ENCODE measurements at regions of chr6 and their contacts with region 1.

Region 1: DNA sequence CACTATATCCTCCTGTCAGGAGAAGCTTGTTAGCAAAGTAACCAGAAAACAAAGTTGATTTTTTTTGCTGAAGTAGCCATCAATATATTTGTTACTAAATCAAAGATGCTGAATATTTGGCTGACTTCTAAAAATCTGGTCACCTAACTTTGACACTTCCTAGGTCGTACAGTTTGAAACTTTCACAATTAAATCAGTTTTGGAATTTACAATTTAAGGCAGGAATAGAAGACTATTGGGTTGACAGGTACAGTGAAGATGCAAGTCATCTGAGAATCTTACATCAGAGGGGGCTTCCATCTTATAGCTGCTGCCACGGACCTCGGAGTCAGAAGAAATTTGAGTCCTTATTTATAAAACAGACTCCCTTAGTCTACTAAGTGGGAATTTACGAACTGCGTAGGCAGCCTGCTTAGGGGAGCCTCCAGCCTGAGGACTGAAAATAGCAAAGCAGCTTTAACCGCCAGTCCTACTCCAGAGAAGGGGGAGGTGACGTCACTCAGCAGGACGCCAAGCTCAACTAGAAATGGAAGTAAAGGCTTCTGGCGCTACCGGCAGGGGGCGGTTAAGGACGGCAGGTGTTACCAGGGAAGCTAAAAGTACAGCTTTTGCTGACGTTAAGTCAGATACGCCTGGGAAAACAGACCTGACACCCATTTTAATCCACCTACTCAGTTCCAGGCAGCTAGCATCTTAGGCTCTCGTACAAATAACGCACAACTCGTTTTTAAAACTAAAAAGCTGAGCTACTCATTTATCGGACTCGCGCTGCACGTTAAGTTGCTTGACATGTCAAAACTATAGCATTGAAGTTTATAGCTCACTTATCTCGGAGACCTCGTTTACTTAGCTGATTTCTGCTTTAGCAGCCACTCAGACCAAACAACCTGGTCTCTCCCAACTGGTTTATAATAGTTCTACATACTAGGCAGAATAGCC is 61.1 kb upstream of the HFE start:
- DNase-seq: peak; percentile 74 to 99 (median 89)
- ATAC-seq: peak; percentile 43
- H3K4me3 ChIP-seq: peak overlapping the region; percentile 50 to 76
- H3K4me3 Mint-ChIP-seq: peak overlapping the region; percentile 86
- H3K27ac ChIP-seq: peak overlapping the region; percentile 93 to 96
- H3K27ac Mint-ChIP-seq: peak overlapping the region; percentile 98
- H3K4me1 ChIP-seq: peaks cover 25% of the 10 kb centered on the region
- H3K4me1 Mint-ChIP-seq: peaks cover 48% of the 10 kb centered on the region
- H3K27me3 ChIP-seq: no peaks in the 10 kb centered on the region
- H3K27me3 Mint-ChIP-seq: no peaks in the 10 kb centered on the region
- CTCF ChIP-seq: peak; percentile 80

Region 2: DNA sequence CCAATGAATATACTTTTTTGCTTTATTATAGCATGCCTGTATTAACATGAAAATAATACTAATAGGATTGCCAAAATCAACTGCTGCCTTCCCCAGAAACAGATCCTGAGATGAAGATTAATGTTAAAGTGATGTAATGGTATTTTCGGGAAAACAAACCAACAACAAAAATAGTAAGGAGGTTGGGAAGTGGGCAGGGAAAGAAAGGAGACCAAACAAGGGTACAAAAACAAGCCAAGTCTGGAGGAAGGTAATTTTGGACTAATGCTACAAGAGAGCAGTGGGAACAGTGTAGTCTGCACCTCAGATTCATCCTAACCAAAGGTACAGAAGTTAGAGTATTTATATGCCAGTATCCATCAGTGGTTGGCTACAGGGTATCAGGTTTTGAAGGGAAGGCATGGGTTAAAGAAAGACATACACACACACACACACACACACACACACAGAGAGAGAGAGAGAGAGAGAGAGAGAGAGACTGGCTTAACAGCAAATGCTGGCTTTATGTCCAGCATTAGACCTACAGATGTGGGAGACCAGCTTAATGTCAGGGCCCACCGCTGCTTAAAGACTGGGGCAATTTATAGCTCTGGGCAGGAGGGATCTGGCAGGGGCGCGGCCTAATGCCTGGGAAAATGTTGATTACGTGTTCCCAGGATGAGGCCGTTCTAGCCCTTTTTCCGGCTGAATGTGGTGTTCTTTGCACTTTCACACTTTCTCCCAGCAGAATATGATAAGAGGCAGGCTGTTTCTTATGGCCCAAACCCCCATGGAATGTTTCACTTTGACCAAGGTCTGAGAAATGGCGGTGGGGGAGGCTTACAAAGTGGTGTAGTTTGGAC is 190.5 kb before region 1 on chr6:
- CTCF ChIA-PET with region 1: no interaction called
- POLR2A ChIA-PET with region 1: no interaction called
- intact Hi-C with region 1: no loop called
- DNase-seq: no peak
- ATAC-seq: no peak
- H3K4me3 ChIP-seq: no peak overlapping the region
- H3K4me3 Mint-ChIP-seq: no peak overlapping the region
- H3K27ac ChIP-seq: no peak overlapping the region
- H3K27ac Mint-ChIP-seq: no peak overlapping the region
- H3K4me1 ChIP-seq: no peaks in the 10 kb centered on the region
- H3K4me1 Mint-ChIP-seq: no peaks in the 10 kb centered on the region
- H3K27me3 ChIP-seq: no peaks in the 10 kb centered on the region
- H3K27me3 Mint-ChIP-seq: peaks cover 10% of the 10 kb centered on the region
- CTCF ChIP-seq: no peak

Region 3: DNA sequence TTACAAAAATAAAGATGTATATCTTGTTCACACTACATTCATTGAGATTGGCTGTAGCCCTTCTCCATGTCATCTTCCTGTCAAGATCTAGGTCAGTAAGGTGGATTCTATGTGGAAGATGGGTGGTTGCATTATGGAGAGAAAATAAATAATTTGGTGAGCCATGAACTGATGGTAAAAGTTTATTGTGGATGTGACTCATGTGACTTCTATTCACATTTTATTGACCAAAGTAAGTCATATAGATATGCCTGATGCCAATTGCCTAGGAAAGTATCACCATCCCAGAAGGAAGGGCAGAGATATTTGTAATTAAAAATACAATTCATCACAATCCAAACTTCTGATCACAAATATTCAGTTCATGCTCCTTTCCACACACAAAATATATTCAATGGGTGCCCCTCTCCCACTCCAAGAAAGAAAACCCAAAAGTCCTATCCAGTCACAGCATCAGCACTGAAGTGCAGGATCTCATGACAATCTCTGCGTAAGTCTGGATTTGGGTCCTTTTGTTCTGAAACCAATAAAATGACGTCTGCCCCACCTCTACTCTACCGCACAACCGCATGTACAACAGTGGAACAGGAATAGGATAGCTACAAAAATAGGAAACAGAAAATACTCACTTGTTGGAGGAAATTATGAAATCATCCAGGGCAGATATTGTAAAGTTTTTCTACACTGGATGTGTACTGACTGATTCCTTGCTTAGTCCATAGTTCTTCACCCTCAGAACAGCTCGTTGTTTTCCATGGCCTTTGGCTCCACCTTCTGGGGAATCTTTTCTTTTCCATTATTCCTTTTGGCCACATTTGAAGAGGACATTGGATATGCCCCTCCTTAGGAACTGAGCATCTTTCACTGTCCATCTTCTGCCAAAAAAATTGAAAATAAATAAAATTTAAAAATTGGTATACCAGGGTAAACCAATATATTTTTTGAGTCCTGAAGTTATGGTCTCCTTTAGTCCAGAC is 136.0 kb before region 1 on chr6:
- CTCF ChIA-PET with region 1: no interaction called
- POLR2A ChIA-PET with region 1: no interaction called
- intact Hi-C with region 1: no loop called
- DNase-seq: peak in 3 of 9 experiments; percentile 8 to 57 (median 48)
- ATAC-seq: no peak
- H3K4me3 ChIP-seq: no peak overlapping the region
- H3K4me3 Mint-ChIP-seq: no peak overlapping the region
- H3K27ac ChIP-seq: no peak overlapping the region
- H3K27ac Mint-ChIP-seq: no peak overlapping the region
- H3K4me1 ChIP-seq: no peaks in the 10 kb centered on the region
- H3K4me1 Mint-ChIP-seq: no peaks in the 10 kb centered on the region
- H3K27me3 ChIP-seq: no peaks in the 10 kb centered on the region
- H3K27me3 Mint-ChIP-seq: peaks cover 5% of the 10 kb centered on the region
- CTCF ChIP-seq: no peak

Region 4: GRCh38 chr6:26045065-26045927 is 19.1 kb after region 1 on chr6:
- CTCF ChIA-PET with region 1: interaction called, 51 read pairs
- POLR2A ChIA-PET with region 1: interaction called, 506 read pairs
- intact Hi-C with region 1: loop called (anchors 1 kb)
- DNase-seq: peak; percentile 54 to 93 (median 79)
- ATAC-seq: peak; percentile 59
- H3K4me3 ChIP-seq: peak overlapping the region; percentile 67 to 76
- H3K4me3 Mint-ChIP-seq: peak overlapping the region; percentile 89
- H3K27ac ChIP-seq: peak overlapping the region; percentile 73 to 81
- H3K27ac Mint-ChIP-seq: peak overlapping the region; percentile 98
- H3K4me1 ChIP-seq: peaks cover 7% of the 10 kb centered on the region
- H3K4me1 Mint-ChIP-seq: peaks cover 14% of the 10 kb centered on the region
- H3K27me3 ChIP-seq: no peaks in the 10 kb centered on the region
- H3K27me3 Mint-ChIP-seq: no peaks in the 10 kb centered on the region
- CTCF ChIP-seq: no peak

Region 5: DNA sequence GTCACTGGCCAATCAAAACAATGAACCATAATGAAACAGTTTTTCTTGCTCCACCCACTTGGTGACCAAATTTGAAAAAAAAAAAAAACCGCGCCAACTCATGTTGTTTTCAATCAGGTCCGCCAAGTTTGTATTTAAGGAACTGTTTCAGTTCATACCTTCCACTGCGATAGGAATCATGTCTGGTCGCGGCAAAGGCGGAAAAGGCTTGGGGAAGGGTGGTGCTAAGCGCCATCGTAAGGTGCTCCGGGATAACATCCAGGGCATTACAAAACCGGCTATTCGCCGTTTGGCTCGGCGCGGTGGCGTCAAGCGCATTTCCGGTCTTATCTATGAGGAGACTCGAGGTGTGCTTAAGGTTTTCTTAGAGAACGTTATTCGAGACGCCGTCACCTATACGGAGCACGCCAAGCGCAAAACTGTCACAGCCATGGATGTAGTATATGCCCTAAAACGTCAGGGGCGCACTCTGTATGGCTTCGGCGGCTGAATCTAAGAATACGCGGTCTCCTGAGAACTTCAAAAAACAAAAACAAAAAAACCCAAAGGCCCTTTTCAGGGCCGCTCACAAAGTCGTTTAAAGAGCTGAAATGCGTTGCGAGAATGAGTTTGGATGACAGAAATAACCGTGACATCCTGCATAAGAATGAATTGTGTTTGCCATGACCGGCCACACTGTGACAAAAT is 77.8 kb after region 1 on chr6:
- CTCF ChIA-PET with region 1: interaction called, 4 read pairs
- POLR2A ChIA-PET with region 1: interaction called, 34 read pairs
- intact Hi-C with region 1: no loop called
- DNase-seq: peak; percentile 84 to 97 (median 89)
- ATAC-seq: peak; percentile 91
- H3K4me3 ChIP-seq: peak overlapping the region; percentile 52 to 58
- H3K4me3 Mint-ChIP-seq: peak overlapping the region; percentile 85
- H3K27ac ChIP-seq: peak overlapping the region; percentile 85 to 92
- H3K27ac Mint-ChIP-seq: peak overlapping the region; percentile 98
- H3K4me1 ChIP-seq: peaks cover 7% of the 10 kb centered on the region
- H3K4me1 Mint-ChIP-seq: peaks cover 17% of the 10 kb centered on the region
- H3K27me3 ChIP-seq: no peaks in the 10 kb centered on the region
- H3K27me3 Mint-ChIP-seq: no peaks in the 10 kb centered on the region
- CTCF ChIP-seq: peak; percentile 67

Region 6: DNA sequence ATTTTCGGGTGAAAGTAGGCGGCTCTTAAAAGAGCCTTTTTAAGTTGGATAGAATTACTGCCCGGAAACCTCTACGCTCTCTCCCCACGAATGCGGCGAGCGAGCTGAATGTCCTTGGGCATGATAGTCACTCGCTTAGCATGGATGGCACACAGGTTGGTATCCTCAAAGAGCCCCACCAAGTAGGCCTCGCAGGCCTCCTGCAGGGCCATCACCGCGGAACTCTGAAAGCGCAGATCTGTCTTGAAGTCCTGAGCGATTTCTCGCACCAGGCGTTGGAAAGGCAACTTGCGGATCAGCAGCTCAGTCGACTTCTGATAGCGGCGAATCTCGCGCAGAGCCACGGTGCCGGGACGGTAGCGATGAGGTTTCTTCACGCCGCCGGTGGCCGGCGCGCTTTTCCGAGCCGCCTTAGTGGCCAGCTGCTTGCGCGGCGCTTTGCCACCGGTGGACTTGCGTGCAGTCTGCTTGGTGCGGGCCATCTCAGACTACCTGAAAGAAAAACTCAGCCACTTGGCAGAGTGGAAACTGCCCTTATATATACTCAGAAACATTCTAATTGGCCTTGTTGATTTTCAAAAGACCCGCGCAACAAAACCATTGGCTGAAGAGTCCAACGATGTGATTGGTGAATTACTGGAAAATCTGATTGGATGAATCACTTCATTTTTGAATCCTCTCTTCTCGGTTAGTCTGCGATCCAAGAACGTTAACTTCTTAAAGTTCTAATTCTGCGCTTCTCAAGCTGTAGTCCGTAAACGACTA is 244.9 kb after region 1 on chr6:
- CTCF ChIA-PET with region 1: interaction called, 3 read pairs
- POLR2A ChIA-PET with region 1: interaction called, 11 read pairs
- intact Hi-C with region 1: loop called (anchors 2 to 5 kb)
- DNase-seq: peak; percentile 68 to 91 (median 80)
- ATAC-seq: peak; percentile 22
- H3K4me3 ChIP-seq: peak overlapping the region; percentile 65 to 67
- H3K4me3 Mint-ChIP-seq: no peak overlapping the region
- H3K27ac ChIP-seq: peak overlapping the region; percentile 73 to 92
- H3K27ac Mint-ChIP-seq: peak overlapping the region; percentile 73
- H3K4me1 ChIP-seq: peaks cover 22% of the 10 kb centered on the region
- H3K4me1 Mint-ChIP-seq: peaks cover 13% of the 10 kb centered on the region
- H3K27me3 ChIP-seq: no peaks in the 10 kb centered on the region
- H3K27me3 Mint-ChIP-seq: no peaks in the 10 kb centered on the region
- CTCF ChIP-seq: no peak

Region 7: DNA sequence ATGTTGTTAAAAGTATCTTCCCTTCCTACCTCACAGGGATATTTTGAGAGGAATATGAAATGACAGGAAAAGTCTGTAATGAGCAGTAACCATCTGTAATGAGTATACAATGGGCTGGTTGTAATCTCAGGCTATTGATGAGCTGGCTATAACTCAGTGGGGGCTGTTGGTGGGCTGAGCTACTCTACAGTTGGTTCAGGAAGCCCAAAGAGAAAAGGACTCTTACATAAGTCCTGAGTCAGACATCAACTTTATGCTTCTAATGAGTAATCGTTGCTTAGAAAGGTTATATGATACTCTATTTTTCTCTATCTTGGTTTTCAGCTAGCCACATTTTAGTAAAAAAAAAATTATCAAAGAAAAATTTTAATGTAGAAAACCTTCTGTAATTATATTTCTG is 1388.8 kb after region 1 on chr6:
- CTCF ChIA-PET with region 1: no interaction called
- POLR2A ChIA-PET with region 1: no interaction called
- intact Hi-C with region 1: no loop called
- DNase-seq: no peak
- ATAC-seq: no peak
- H3K4me3 ChIP-seq: no peak overlapping the region
- H3K4me3 Mint-ChIP-seq: no peak overlapping the region
- H3K27ac ChIP-seq: no peak overlapping the region
- H3K27ac Mint-ChIP-seq: no peak overlapping the region
- H3K4me1 ChIP-seq: no peaks in the 10 kb centered on the region
- H3K4me1 Mint-ChIP-seq: no peaks in the 10 kb centered on the region
- H3K27me3 ChIP-seq: no peaks in the 10 kb centered on the region
- H3K27me3 Mint-ChIP-seq: peaks cover 22% of the 10 kb centered on the region
- CTCF ChIP-seq: no peak

Region 8: DNA sequence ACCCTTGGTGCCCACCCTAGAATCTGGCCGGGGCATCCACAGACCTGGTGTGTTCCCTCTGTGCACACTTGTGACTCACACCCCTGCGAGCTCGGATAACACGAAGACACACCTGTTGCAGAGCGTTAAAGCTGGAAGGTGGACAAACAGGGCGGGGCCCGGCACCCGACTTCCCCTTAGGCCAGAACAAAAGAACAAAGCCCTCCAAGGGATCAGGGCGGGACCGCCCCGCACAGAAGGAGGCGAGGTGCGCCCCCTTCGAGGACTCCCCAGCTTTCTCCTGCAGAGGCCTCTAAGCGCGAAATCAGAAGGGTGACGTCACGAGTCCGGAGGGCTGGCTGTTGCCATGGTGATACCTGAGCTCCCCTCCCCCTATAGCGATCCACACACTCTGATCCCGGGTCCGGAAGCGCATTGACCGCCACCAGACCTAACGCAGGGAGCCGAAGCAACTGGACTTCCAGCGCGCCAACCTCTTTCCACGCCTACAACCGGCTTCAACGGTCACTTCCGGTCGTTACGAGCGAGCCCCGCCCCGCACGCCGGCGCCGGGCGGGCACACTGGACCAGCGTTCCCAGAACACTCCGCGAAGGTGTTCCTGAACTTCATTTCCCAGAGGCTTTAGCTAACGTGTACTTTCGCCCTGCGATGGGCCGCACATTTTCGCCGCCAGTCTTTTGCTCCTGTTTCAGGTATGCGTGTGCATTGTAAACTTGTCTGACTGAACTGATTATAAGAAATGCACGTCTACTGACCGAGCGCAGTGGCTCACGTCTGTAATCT is 1446.6 kb after region 1 on chr6 and contains the start of gene ZNF184:
- CTCF ChIA-PET with region 1: no interaction called
- POLR2A ChIA-PET with region 1: no interaction called
- intact Hi-C with region 1: loop called in 1 of 2 experiments (anchors 10 kb)
- DNase-seq: peak; percentile 71 to 94 (median 84)
- ATAC-seq: peak; percentile 63
- H3K4me3 ChIP-seq: peak within 1 kb of the TSS; percentile 80 to 90
- H3K4me3 Mint-ChIP-seq: peak within 1 kb of the TSS; percentile 96
- H3K27ac ChIP-seq: peak within 1 kb of the TSS; percentile 94 to 96
- H3K27ac Mint-ChIP-seq: peak within 1 kb of the TSS; percentile 96
- H3K4me1 ChIP-seq: peaks cover 26% of the 10 kb centered on the region
- H3K4me1 Mint-ChIP-seq: peaks cover 48% of the 10 kb centered on the region
- H3K27me3 ChIP-seq: no peaks in the 10 kb centered on the region
- H3K27me3 Mint-ChIP-seq: no peaks in the 10 kb centered on the region
- CTCF ChIP-seq: no peak
- total RNA-seq, gene ZNF184: 31.8 to 32.9 TPM

Region 9: GRCh38 chr6:27871924-27872638 is 1845.9 kb after region 1 on chr6:
- CTCF ChIA-PET with region 1: no interaction called
- POLR2A ChIA-PET with region 1: interaction called, 22 read pairs
- intact Hi-C with region 1: no loop called
- DNase-seq: peak; percentile 72 to 97 (median 85)
- ATAC-seq: peak; percentile 75
- H3K4me3 ChIP-seq: peak overlapping the region; percentile 54 to 67
- H3K4me3 Mint-ChIP-seq: peak overlapping the region; percentile 82
- H3K27ac ChIP-seq: peak overlapping the region; percentile 81 to 86
- H3K27ac Mint-ChIP-seq: peak overlapping the region; percentile 98
- H3K4me1 ChIP-seq: peaks cover 20% of the 10 kb centered on the region
- H3K4me1 Mint-ChIP-seq: peaks cover 36% of the 10 kb centered on the region
- H3K27me3 ChIP-seq: peaks cover 0 to 3% of the 10 kb centered on the region in 2 experiments
- H3K27me3 Mint-ChIP-seq: no peaks in the 10 kb centered on the region
- CTCF ChIP-seq: peak; percentile 48

Measured in CD8-positive, alpha-beta T cell (primary cell).